PC-3 (cell line): ENCODE measurements at regions of chr20 and their contacts with region 1.

Region 1: GRCh38 chr20:52312132-52312729 is 120.7 kb upstream of the ZFP64 start:
- DNase-seq: peak; percentile 90
- ATAC-seq: peak; percentile 46
- H3K4me3 ChIP-seq: no peak overlapping the region
- H3K27ac ChIP-seq: no peak overlapping the region
- H3K4me1 ChIP-seq: peaks cover 4% of the 10 kb centered on the region; the same call in 1 of the 2 replicates
- H3K27me3 ChIP-seq: peaks cover 61% of the 10 kb centered on the region
- CTCF ChIP-seq: peak; percentile 98

Region 2: DNA sequence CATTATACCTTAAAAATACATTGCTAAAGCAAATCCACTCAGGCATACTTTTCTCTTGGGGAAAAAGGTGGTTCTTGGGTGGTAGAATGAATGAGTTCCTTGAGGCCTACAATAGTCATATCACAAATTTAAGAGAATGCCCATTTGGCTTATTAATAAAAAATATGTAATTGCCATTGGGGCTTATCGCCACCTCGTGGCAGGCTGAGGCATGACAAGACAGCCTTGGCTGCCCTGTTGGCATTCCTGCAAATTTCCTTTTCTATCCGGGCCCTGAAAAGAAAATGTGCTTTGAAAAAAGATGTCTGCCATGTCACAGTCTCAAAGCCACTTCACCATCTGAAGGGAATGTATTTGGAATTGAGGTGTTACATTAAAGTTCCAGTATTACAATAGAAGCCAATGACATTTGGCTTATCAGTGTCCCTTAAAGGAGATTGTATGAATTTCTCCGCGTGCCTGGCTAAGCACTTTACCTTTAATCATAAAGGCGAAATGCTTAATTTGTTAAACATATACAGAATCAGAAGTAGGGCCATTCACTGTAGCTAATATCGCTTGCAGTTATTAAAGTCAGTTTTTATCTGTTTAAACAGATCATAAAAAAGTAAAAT is 67.6 kb after region 1 on chr20:
- CTCF ChIA-PET with region 1: interaction called, 7 read pairs
- POLR2A ChIA-PET with region 1: no interaction called
- intact Hi-C with region 1: loop called (anchors 1 kb)
- DNase-seq: peak; percentile 71
- ATAC-seq: no peak
- H3K4me3 ChIP-seq: no peak overlapping the region
- H3K27ac ChIP-seq: no peak overlapping the region
- H3K4me1 ChIP-seq: no peaks in the 10 kb centered on the region
- H3K27me3 ChIP-seq: peaks cover 25% of the 10 kb centered on the region; the same call in 1 of the 2 replicates
- CTCF ChIP-seq: peak; percentile 99

Region 3: GRCh38 chr20:53216856-53217576 is 904.8 kb after region 1 on chr20:
- CTCF ChIA-PET with region 1: no interaction called
- POLR2A ChIA-PET with region 1: no interaction called
- intact Hi-C with region 1: loop called (anchors 10 kb)
- DNase-seq: peak; percentile 81
- ATAC-seq: peak; percentile 93
- H3K4me3 ChIP-seq: no peak overlapping the region
- H3K27ac ChIP-seq: no peak overlapping the region
- H3K4me1 ChIP-seq: no peaks in the 10 kb centered on the region
- H3K27me3 ChIP-seq: peaks cover 80% of the 10 kb centered on the region
- CTCF ChIP-seq: peak; percentile 99

Region 4: DNA sequence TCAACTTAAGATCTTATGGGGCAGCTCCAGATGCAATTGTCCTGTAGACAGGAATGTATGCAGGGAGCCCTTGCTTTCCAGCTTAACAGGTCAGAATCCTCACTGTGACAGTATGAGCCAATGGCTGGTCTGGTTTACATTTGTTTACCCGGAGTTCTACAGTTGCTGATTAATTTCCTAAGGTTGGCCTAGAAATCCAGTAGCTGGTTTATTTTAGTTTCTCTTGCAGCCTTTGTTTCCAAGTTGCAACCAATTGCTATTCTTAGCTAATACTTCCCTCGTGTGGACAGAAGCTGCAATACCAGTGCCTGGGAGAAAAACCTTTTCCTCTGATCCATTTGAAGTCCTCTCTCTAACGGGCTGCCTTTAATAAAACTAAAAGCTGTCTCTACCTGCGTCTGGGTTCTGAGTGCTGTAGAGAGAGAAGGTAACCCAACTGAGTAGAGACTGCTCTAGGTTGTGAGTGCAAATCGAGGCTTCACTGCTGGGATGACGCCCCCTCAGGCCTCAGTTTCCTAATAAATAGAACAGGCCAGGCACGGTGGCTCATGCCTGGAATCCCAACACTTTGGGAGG is 1235.5 kb after region 1 on chr20:
- CTCF ChIA-PET with region 1: interaction called, 6 read pairs
- POLR2A ChIA-PET with region 1: no interaction called
- intact Hi-C with region 1: loop called (anchors 1 kb)
- DNase-seq: peak; percentile 95
- ATAC-seq: peak; percentile 91
- H3K4me3 ChIP-seq: no peak overlapping the region
- H3K27ac ChIP-seq: no peak overlapping the region
- H3K4me1 ChIP-seq: no peaks in the 10 kb centered on the region
- H3K27me3 ChIP-seq: no peaks in the 10 kb centered on the region
- CTCF ChIP-seq: peak; percentile 99